ENCODE measurements at regions of chr6 and their contacts with region 1.

Region 1: GRCh38 chr6:107318100-107318736 is 141.1 kb downstream of the PDSS2 start:
- DNase-seq: peak; percentile 64
- H3K4me3 ChIP-seq: no peak overlapping the region
- H3K27ac ChIP-seq: no peak overlapping the region
- H3K4me1 ChIP-seq: peaks cover 2 to 24% of the 10 kb centered on the region in 2 experiments; a peak in 3 of 4 replicates
- H3K27me3 ChIP-seq: no peaks in the 10 kb centered on the region
- CTCF ChIP-seq: peak; percentile 84
- EP300 ChIP-seq: no peak
- RAD21 ChIP-seq: peak; percentile 92

Region 2: GRCh38 chr6:106979427-106979884 is 338.8 kb before region 1 on chr6:
- CTCF ChIA-PET with region 1: no interaction called
- POLR2A ChIA-PET with region 1: no interaction called
- DNase-seq: peak; percentile 82
- H3K4me3 ChIP-seq: peak overlapping the region in 1 of 2 experiments; percentile 24; a peak in 1 of 4 replicates
- H3K27ac ChIP-seq: no peak overlapping the region
- H3K4me1 ChIP-seq: no peaks in the 10 kb centered on the region; a peak in 1 of 4 replicates
- H3K27me3 ChIP-seq: peaks cover 30% of the 10 kb centered on the region; the same call in 1 of the 2 replicates
- CTCF ChIP-seq: peak; percentile 96
- EP300 ChIP-seq: no peak
- RAD21 ChIP-seq: peak; percentile 99

Region 3: GRCh38 chr6:107185391-107185970 is 132.7 kb before region 1 on chr6:
- CTCF ChIA-PET with region 1: interaction called, 13 read pairs
- POLR2A ChIA-PET with region 1: no interaction called
- DNase-seq: peak; percentile 41
- H3K4me3 ChIP-seq: no peak overlapping the region
- H3K27ac ChIP-seq: no peak overlapping the region
- H3K4me1 ChIP-seq: peaks cover 0 to 5% of the 10 kb centered on the region in 2 experiments; a peak in 1 of 4 replicates
- H3K27me3 ChIP-seq: no peaks in the 10 kb centered on the region
- CTCF ChIP-seq: peak; percentile 29
- EP300 ChIP-seq: no peak
- RAD21 ChIP-seq: peak; percentile 78

Region 4: DNA sequence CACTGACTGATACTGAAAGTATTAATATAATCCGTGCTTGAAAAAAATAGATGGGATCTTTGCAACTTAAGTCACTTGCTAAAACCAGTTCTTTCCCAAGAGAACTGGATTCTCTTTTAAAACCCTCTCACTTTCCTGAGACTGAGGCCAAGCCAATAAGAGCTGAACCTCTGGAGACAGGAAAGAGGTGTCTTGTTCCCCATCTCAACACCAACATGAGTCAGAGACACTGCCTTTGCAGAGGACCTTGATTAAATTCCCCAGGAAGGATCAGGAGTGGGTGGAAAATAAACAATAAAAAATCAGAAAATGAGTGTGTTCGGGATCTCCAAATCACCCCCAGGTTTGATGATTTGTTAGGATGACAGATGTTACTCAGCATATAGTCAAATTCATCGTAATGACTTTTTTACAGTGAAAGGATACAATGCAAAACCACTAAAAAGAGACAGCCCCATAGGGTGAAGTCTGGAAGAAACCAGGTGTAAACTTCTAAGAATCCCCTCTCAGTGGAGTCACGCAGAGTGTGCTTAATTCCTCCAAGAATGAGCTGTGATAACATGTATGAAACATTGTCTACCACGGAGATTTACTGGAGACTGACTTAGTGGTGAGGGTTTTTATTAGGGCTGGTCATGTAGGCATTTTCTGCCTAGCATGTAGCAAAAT is 80.1 kb before region 1 on chr6:
- CTCF ChIA-PET with region 1: no interaction called
- POLR2A ChIA-PET with region 1: no interaction called
- DNase-seq: no peak
- H3K4me3 ChIP-seq: no peak overlapping the region
- H3K27ac ChIP-seq: no peak overlapping the region
- H3K4me1 ChIP-seq: peaks cover 0 to 2% of the 10 kb centered on the region in 2 experiments; a peak in 1 of 4 replicates
- H3K27me3 ChIP-seq: no peaks in the 10 kb centered on the region
- CTCF ChIP-seq: no peak
- EP300 ChIP-seq: no peak
- RAD21 ChIP-seq: no peak

Region 5: GRCh38 chr6:107330168-107330567 is 11.9 kb after region 1 on chr6:
- CTCF ChIA-PET with region 1: interaction called, 21 read pairs
- POLR2A ChIA-PET with region 1: no interaction called
- DNase-seq: no peak
- H3K4me3 ChIP-seq: no peak overlapping the region
- H3K27ac ChIP-seq: no peak overlapping the region
- H3K4me1 ChIP-seq: no peaks in the 10 kb centered on the region
- H3K27me3 ChIP-seq: no peaks in the 10 kb centered on the region
- CTCF ChIP-seq: no peak
- EP300 ChIP-seq: no peak
- RAD21 ChIP-seq: no peak

Region 6: DNA sequence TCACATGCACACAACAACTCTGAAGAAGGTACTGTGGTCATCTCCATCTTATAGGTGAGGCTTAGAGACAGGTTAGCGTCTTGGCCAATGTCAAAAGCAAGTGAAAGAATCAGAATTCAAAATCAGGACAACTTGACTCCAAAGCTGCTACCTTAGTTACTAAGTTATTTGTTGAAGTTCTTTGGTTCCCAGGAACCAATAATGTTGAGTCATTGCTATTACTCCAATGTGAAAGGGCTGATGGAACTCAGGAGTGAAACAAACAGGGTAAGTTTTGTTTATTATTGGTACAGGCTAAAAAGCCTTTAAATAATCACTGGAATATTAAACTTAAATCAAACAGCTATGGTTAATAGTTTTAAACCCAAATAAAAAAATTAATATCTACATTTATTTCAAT is 30.0 kb after region 1 on chr6:
- CTCF ChIA-PET with region 1: interaction called, 10 read pairs
- POLR2A ChIA-PET with region 1: no interaction called
- DNase-seq: no peak
- H3K4me3 ChIP-seq: no peak overlapping the region
- H3K27ac ChIP-seq: no peak overlapping the region
- H3K4me1 ChIP-seq: no peaks in the 10 kb centered on the region; a peak in 2 of 4 replicates
- H3K27me3 ChIP-seq: no peaks in the 10 kb centered on the region
- CTCF ChIP-seq: no peak
- EP300 ChIP-seq: no peak
- RAD21 ChIP-seq: no peak

Region 7: DNA sequence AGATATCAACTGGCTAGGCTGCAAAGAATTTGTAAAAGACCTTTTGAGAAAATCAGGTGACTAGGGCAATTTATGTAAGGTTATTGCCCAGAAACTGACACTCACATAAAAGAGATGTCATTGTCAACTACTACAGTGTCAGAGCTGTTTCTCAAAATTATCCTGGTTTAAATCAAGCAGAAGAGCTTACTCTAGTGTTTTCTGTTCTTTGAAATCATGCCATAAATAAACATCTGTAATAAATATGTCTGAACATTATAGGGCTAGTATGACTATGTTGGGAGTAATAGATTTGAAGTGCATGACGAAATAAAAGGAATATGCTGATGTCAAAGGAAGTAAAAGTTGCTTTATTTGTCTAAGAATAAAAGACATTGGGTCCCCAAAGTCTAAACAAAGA is 152.1 kb after region 1 on chr6:
- CTCF ChIA-PET with region 1: no interaction called
- POLR2A ChIA-PET with region 1: no interaction called
- DNase-seq: no peak
- H3K4me3 ChIP-seq: no peak overlapping the region
- H3K27ac ChIP-seq: no peak overlapping the region
- H3K4me1 ChIP-seq: peaks cover 0 to 5% of the 10 kb centered on the region in 2 experiments; a peak in 1 of 4 replicates
- H3K27me3 ChIP-seq: no peaks in the 10 kb centered on the region
- CTCF ChIP-seq: no peak
- EP300 ChIP-seq: no peak
- RAD21 ChIP-seq: no peak

Region 8: DNA sequence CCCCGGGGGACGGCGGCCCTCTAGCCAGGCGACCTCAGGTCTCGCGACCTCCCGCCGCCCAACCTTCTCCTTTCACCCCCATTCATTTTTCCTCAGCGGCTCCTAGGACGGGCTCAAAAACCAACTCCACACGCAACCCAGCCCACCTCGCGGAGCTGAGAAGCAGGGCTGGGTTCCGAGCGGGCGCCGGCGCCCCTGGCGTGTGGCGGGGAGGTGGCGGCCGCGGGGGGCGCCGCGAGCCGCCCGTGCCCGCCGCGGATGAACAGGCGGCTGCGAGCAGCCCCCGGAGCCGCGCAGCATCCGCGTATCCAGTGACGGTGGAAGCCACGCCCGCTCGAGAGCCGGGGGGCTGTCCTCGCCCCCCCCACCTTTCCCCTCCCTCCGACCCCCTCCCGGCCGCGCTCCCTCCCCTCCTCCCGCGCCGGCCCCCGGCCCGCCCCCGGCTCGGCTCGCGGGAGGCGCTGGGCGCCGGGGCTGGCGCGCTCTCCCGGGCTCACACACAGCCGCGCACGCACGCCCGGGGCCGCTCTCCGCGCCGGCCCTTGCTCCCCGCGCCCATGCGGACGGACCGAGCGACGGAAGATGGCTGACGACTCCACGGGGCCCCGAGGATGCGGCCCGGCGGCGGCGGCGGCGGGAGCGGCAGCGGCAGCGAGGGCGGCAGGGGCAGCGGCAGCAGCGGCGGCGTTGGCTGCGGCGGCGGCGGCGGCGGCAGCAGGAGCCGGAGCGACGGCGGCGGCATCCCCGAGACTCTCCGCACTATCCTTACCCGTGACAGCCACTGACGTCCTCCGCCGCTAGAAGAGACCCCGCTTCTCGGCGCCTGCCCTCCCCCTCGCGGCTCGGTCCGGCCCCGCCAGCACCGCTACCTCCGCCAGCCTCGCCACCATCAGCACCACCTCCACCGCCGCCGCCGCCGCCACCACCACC is 171.7 kb after region 1 on chr6 and contains the start of gene SOBP:
- CTCF ChIA-PET with region 1: interaction called, 18 read pairs
- POLR2A ChIA-PET with region 1: interaction called, 5 read pairs
- DNase-seq: peak; percentile 96
- H3K4me3 ChIP-seq: peak within 1 kb of the TSS; percentile 59 to 83
- H3K27ac ChIP-seq: peak within 1 kb of the TSS; percentile 40 to 81; a peak in 3 of 4 replicates
- H3K4me1 ChIP-seq: peaks cover 13 to 23% of the 10 kb centered on the region in 2 experiments
- H3K27me3 ChIP-seq: no peaks in the 10 kb centered on the region
- CTCF ChIP-seq: no peak; the same call in 1 of the 2 replicates
- EP300 ChIP-seq: no peak
- RAD21 ChIP-seq: no peak
- polyA plus RNA-seq, gene SOBP: 0.21 and 0.61 TPM in 2 replicates

Region 9: GRCh38 chr6:107674995-107675738 is 356.9 kb after region 1 on chr6:
- CTCF ChIA-PET with region 1: interaction called, 34 read pairs
- POLR2A ChIA-PET with region 1: no interaction called
- DNase-seq: peak; percentile 83
- H3K4me3 ChIP-seq: no peak overlapping the region; a peak in 1 of 4 replicates
- H3K27ac ChIP-seq: peak overlapping the region in 1 of 2 experiments; percentile 64; a peak in 1 of 4 replicates
- H3K4me1 ChIP-seq: peaks cover 0 to 22% of the 10 kb centered on the region in 2 experiments; a peak in 2 of 4 replicates
- H3K27me3 ChIP-seq: no peaks in the 10 kb centered on the region
- CTCF ChIP-seq: peak; percentile 83
- EP300 ChIP-seq: no peak
- RAD21 ChIP-seq: peak; percentile 86

Region 10: DNA sequence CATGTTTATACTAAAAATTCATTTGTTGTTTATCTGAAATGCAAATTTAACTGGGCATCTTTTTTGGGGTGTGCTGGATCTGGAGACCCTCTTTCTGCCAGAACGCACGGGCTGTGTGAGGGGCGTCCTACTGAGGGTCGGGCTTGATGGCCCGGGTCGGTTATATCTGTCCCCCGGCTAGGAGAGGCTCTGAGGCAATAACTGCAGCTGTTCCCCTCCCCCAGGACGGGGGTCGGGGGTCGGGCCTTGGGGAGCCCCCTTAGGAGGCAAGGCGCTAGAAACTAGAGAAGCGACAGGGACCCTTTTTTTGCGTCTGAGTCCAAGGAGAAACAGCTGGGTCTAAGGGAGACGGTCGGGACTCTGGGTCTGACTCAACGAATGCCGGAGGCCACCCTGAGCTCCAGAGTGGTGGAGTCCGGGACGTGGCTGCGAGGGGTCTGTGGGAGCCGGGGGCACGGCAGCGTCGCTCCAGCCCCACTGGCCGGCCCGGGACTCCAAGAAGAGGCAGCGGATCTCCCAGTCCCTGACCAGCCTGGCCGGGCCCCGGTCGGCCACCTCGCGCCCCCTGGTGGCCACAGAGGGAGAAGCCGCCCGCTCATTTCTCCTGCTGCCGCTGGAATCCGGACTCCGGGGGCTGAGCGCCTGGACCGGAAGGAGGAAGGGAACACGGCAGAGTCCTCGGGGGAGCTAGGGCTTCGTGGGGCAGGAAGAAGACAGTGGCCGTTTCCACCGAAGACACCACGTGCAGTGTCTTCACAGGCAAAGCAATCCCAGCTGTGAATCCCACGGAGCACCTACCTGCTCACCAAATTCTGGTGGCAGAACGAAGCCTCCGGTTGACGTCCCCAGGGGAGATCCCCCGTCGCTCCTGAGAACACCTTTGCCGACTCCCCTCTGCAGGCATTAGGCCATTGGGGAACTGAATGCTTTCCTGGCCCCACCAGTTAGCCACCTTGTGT is 529.9 kb after region 1 on chr6:
- CTCF ChIA-PET with region 1: interaction called, 14 read pairs
- POLR2A ChIA-PET with region 1: no interaction called
- DNase-seq: peak; percentile 95
- H3K4me3 ChIP-seq: peak overlapping the region; percentile 47 to 64
- H3K27ac ChIP-seq: no peak overlapping the region
- H3K4me1 ChIP-seq: peaks cover 0 to 4% of the 10 kb centered on the region in 2 experiments; a peak in 1 of 4 replicates
- H3K27me3 ChIP-seq: no peaks in the 10 kb centered on the region; the same call in 1 of the 2 replicates
- CTCF ChIP-seq: peak; percentile 88
- EP300 ChIP-seq: no peak
- RAD21 ChIP-seq: peak; percentile 82

Region 11: DNA sequence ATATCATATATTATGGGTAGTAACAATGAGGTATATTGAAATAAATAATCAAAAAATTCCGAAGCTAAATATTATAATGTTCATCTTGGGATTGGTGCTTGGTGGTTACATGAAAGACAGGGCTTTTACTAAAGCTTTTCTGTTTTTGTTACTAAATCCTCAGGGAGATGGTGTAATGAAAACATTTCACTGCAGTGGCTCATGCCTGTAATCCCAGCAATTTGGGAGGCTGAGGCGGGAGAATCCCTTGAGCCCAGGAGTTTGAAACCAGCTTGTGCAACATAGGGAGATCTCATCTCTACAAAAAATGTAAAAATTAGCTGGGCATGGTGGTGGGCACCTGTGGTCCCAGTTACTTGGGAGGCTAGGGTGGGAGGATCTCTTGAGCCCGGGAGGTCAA is 1019.5 kb after region 1 on chr6:
- CTCF ChIA-PET with region 1: no interaction called
- POLR2A ChIA-PET with region 1: no interaction called
- DNase-seq: no peak
- H3K4me3 ChIP-seq: no peak overlapping the region
- H3K27ac ChIP-seq: no peak overlapping the region
- H3K4me1 ChIP-seq: no peaks in the 10 kb centered on the region
- H3K27me3 ChIP-seq: no peaks in the 10 kb centered on the region
- CTCF ChIP-seq: no peak
- EP300 ChIP-seq: no peak
- RAD21 ChIP-seq: no peak

Measured in SK-N-SH (cell line).